Transverse colon (tissue), 4 donors: ENCODE measurements at regions of chr1 and their contacts with region 1.

Region 1: GRCh38 chr1:229600229-229600628 is 25.7 kb downstream of the TAF5L start:
- DNase-seq: no peak
- H3K4me3 ChIP-seq: no peak overlapping the region
- H3K27ac ChIP-seq: no peak overlapping the region
- H3K4me1 ChIP-seq: peaks cover 0 to 26% (median 15%) of the 10 kb centered on the region in 4 donors
- H3K27me3 ChIP-seq: no peaks in the 10 kb centered on the region
- CTCF ChIP-seq: no peak
- EP300 ChIP-seq: no peak
- POLR2A ChIP-seq: no peak

Region 2: GRCh38 chr1:229127301-229127700 is 472.9 kb before region 1 on chr1:
- in situ Hi-C with region 1: no loop called
- intact Hi-C with region 1: no loop called
- DNase-seq: no peak
- H3K4me3 ChIP-seq: no peak overlapping the region
- H3K27ac ChIP-seq: no peak overlapping the region
- H3K4me1 ChIP-seq: peaks cover 4 to 40% (median 28%) of the 10 kb centered on the region in 4 donors
- H3K27me3 ChIP-seq: no peaks in the 10 kb centered on the region
- CTCF ChIP-seq: no peak
- EP300 ChIP-seq: no peak
- POLR2A ChIP-seq: no peak

Region 3: GRCh38 chr1:229620876-229621275 is 20.6 kb after region 1 on chr1:
- in situ Hi-C with region 1: no loop called
- intact Hi-C with region 1: loop called (anchors 1 kb)
- DNase-seq: no peak
- H3K4me3 ChIP-seq: no peak overlapping the region
- H3K27ac ChIP-seq: no peak overlapping the region
- H3K4me1 ChIP-seq: peaks cover 7 to 18% (median 14%) of the 10 kb centered on the region in 4 donors
- H3K27me3 ChIP-seq: no peaks in the 10 kb centered on the region
- CTCF ChIP-seq: no peak
- EP300 ChIP-seq: no peak
- POLR2A ChIP-seq: no peak

Region 4: GRCh38 chr1:229736376-229736775 is 136.1 kb after region 1 on chr1:
- in situ Hi-C with region 1: no loop called
- intact Hi-C with region 1: no loop called
- DNase-seq: no peak
- H3K4me3 ChIP-seq: no peak overlapping the region
- H3K27ac ChIP-seq: no peak overlapping the region
- H3K4me1 ChIP-seq: no peaks in the 10 kb centered on the region
- H3K27me3 ChIP-seq: no peaks in the 10 kb centered on the region
- CTCF ChIP-seq: no peak
- EP300 ChIP-seq: no peak
- POLR2A ChIP-seq: no peak